HCT116 (cell line): ENCODE measurements at regions of chr2 and their contacts with region 1.

Region 1: DNA sequence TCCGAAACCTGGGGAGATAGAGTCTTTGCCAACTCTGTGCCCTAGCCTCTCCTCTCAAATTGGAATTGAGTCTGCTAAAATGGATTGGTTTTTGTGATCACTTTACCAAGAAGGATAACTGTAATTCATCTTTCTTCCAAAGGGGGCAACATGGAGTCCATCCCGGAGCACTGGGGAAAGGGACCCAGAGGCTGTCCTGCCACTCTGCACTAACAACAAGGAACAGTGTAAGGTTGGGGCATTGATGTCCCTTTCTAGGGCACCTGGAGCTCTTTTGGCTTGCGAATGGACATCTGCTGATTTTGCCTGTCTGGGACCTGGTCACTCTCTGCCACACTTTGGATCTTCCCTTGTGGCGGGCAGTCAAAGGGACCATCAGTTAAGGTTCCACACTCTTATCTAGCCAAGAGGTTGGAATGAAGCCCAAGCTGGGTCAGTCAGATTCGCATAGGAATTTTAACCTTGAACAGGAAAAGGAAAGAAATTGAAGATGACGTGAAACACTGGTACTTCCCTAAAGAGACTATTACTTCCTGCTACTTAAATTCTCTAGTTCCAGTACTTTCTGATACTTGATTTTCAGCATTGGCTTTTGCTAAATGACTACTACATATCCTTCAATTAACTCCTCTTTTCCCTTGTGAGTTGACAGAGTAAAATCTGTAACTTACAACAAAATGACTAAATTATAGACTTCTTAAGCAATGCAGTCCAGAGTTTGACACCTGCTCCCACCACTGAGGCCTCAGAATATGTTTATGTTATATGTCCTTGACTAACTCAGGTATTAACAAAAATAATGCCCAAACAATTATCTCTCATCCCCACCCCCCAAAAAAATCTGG is 64.7 kb upstream of the KLF7 start:
- DNase-seq: peak; percentile 26
- ATAC-seq: peak; percentile 98
- H3K4me3 ChIP-seq: no peak overlapping the region
- H3K27ac ChIP-seq: no peak overlapping the region
- H3K4me1 ChIP-seq: no peaks in the 10 kb centered on the region
- H3K27me3 ChIP-seq: no peaks in the 10 kb centered on the region
- CTCF ChIP-seq: peak; percentile 25 to 70 (median 67); a peak in 5 of 6 replicates
- POLR2A ChIP-seq: no peak
- RAD21 ChIP-seq: peak; percentile 43; the same call in 1 of the 2 replicates

Region 2: DNA sequence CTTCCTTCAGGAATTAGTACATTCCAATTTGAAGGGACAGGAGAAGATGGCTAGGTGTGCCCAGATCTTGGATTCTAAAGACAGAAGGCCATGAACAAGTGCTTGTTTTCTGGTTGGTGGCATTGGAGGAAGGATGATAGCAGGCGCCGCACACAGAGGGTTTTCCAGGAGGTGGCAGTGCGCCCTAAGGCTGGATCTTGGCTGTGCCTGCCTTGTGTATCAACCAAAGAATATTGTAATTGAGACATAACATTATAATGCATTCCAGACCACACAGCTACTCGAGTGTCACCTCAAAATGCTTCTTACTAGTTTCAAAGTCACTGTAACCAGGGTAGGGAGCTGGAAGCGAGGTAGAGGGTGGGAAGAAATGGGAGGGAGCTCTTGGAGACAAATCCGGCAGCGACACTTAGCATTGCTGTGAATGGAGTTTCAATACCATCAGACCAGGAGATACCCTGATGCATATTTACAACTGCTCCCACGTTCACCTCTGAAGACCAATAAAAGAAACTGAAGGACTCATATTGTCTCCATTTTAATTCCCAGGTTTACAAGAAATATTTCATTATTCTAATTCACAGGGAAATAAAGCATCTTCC is 248.6 kb before region 1 on chr2:
- CTCF ChIA-PET with region 1: no interaction called
- POLR2A ChIA-PET with region 1: no interaction called
- RAD21 ChIA-PET with region 1: no interaction called
- intact Hi-C with region 1: loop called (anchors 10 kb)
- DNase-seq: peak; percentile 36
- ATAC-seq: peak; percentile 91
- H3K4me3 ChIP-seq: no peak overlapping the region
- H3K27ac ChIP-seq: no peak overlapping the region
- H3K4me1 ChIP-seq: no peaks in the 10 kb centered on the region
- H3K27me3 ChIP-seq: no peaks in the 10 kb centered on the region
- CTCF ChIP-seq: peak; percentile 75 to 83 (median 78)
- POLR2A ChIP-seq: no peak
- RAD21 ChIP-seq: peak; percentile 96

Region 3: GRCh38 chr2:207663870-207664549 is 433.5 kb after region 1 on chr2:
- CTCF ChIA-PET with region 1: no interaction called
- POLR2A ChIA-PET with region 1: no interaction called
- RAD21 ChIA-PET with region 1: no interaction called
- intact Hi-C with region 1: no loop called
- DNase-seq: no peak
- ATAC-seq: no peak
- H3K4me3 ChIP-seq: no peak overlapping the region
- H3K27ac ChIP-seq: no peak overlapping the region
- H3K4me1 ChIP-seq: no peaks in the 10 kb centered on the region
- H3K27me3 ChIP-seq: no peaks in the 10 kb centered on the region
- CTCF ChIP-seq: no peak
- POLR2A ChIP-seq: no peak
- RAD21 ChIP-seq: no peak